ENCODE measurements at regions of chr1 and their contacts with region 1.

Region 1: DNA sequence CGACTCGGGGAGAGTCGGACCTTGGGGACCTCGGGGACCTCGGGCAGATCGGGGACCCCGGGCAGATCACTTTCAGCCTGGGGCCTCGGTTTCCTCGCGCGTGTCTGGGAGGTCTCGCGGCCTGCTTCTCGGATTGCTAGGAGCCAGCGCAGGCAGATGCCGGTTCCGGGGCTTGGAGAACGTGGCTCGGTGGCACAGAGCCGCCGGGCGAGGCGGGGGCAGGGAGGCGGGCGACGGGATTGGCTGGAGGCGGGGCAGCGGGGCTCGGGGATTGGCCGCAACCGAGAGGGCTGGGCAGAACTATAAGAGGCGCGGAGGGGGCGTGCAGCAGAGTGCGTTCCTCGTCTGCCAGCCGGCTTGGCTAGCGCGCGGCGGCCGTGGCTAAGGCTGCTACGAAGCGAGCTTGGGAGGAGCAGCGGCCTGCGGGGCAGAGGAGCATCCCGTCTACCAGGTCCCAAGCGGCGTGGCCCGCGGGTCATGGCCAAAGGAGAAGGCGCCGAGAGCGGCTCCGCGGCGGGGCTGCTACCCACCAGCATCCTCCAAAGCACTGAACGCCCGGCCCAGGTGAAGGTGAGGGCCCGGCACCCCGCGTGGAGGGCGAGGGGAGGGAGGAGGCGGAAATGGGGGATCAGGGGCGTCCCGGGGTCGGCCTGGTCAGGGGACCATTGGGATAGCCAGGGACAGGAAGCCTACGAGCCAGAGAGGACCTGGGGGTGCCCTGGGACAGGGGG is at the start of gene MFSD2A:
- DNase-seq: peak; percentile 69 to 95
- H3K4me3 ChIP-seq: peak within 1 kb of the TSS; percentile 50 to 78 (median 69)
- H3K27ac ChIP-seq: no peak within 1 kb of the TSS
- H3K4me1 ChIP-seq: peaks cover under 1 to 9% (median 7%) of the 10 kb centered on the region in 4 experiments
- H3K27me3 ChIP-seq: peaks cover 0 to 16% (median 12%) of the 10 kb centered on the region in 4 experiments; a peak in 5 of 7 replicates
- CTCF ChIP-seq: no peak
- EP300 ChIP-seq: no peak
- POLR2A ChIP-seq: peak; percentile 84 to 89
- RAD21 ChIP-seq: no peak
- total RNA-seq, gene MFSD2A: 25.9 and 26.6 TPM in 2 replicates

Region 2: GRCh38 chr1:39926343-39926793 is 28.6 kb before region 1 on chr1:
- CTCF ChIA-PET with region 1: interaction called, 77 read pairs
- POLR2A ChIA-PET with region 1: interaction called, 10 read pairs
- DNase-seq: no peak
- H3K4me3 ChIP-seq: no peak overlapping the region
- H3K27ac ChIP-seq: no peak overlapping the region
- H3K4me1 ChIP-seq: peaks cover 7 to 12% (median 9%) of the 10 kb centered on the region in 4 experiments
- H3K27me3 ChIP-seq: peaks cover 0 to 5% (median under 1%) of the 10 kb centered on the region in 4 experiments; a peak in 3 of 7 replicates
- CTCF ChIP-seq: no peak
- EP300 ChIP-seq: no peak
- POLR2A ChIP-seq: no peak
- RAD21 ChIP-seq: no peak

Region 3: DNA sequence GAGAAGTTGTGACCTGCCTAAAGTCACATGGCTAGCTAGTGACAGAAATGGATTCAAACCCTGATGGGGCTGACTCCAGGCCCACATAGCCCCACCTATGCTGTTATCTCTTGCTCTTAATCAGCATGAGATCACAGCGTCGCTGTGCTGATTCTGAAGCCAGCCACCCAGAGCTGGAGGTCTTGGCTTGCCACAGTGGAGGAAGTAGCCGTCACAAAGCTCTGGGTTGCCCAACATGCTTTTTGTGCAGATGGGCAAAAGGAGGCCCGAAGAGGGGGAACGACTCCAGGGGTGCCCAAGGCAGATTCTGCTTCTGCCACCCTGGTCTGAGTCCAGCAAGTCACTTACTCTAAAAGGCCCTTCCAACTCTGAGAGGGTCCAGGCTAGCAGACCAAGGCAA is 14.7 kb before region 1 on chr1:
- CTCF ChIA-PET with region 1: interaction called, 6 read pairs
- POLR2A ChIA-PET with region 1: interaction called, 29 read pairs
- DNase-seq: no peak
- H3K4me3 ChIP-seq: no peak overlapping the region
- H3K27ac ChIP-seq: no peak overlapping the region
- H3K4me1 ChIP-seq: peaks cover 0 to 3% (median 0%) of the 10 kb centered on the region in 4 experiments; a peak in 1 of 7 replicates
- H3K27me3 ChIP-seq: no peaks in the 10 kb centered on the region
- CTCF ChIP-seq: no peak
- EP300 ChIP-seq: no peak
- POLR2A ChIP-seq: no peak
- RAD21 ChIP-seq: no peak

Region 4: DNA sequence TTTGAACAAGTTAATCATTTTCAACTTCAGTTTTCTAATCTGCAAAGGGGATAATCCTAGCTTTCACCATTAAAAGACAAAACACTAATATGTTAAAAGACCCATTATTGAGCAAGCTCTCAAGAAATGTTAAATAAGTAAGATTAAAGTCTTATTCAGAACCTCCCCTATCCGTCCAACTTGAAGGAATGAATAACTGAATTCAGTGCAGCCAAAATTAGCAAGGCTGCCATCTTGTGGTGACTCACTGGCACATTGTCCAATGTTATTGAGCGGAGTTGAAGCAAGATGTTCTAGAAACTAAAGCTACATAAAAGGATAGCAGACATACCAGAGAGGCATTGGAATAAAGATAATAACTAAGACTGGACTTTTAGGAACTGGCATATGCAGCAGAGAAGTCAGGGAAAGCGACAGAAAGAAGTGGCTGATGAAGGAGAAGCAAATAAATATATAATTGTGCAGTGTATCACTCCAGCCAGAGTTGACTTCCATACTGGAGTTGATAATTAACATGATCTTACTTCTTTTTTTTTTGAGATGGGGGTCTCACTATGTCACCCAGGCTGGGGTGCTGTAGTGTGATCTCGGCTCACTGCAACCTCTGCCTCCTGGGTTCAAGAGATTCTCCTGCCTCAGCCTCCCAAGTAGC is 77.4 kb after region 1 on chr1:
- CTCF ChIA-PET with region 1: interaction called, 11 read pairs
- POLR2A ChIA-PET with region 1: interaction called, 3 read pairs
- DNase-seq: no peak
- H3K4me3 ChIP-seq: no peak overlapping the region
- H3K27ac ChIP-seq: no peak overlapping the region
- H3K4me1 ChIP-seq: no peaks in the 10 kb centered on the region
- H3K27me3 ChIP-seq: no peaks in the 10 kb centered on the region
- CTCF ChIP-seq: peak in 2 of 3 experiments; percentile 67 to 73; a peak in 3 of 4 replicates
- EP300 ChIP-seq: no peak
- POLR2A ChIP-seq: no peak
- RAD21 ChIP-seq: peak; percentile 71 to 76

Region 5: GRCh38 chr1:40040511-40041465 is 85.8 kb after region 1 on chr1 and contains the start of gene CAP1:
- CTCF ChIA-PET with region 1: no interaction called
- POLR2A ChIA-PET with region 1: interaction called, 10 read pairs
- DNase-seq: peak; percentile 97 to 99
- H3K4me3 ChIP-seq: peak within 1 kb of the TSS; percentile 79 to 99 (median 93)
- H3K27ac ChIP-seq: peak within 1 kb of the TSS; percentile 96
- H3K4me1 ChIP-seq: peaks cover 3 to 7% (median 3%) of the 10 kb centered on the region in 4 experiments; a peak in 4 of 7 replicates
- H3K27me3 ChIP-seq: no peaks in the 10 kb centered on the region
- CTCF ChIP-seq: no peak
- EP300 ChIP-seq: no peak
- POLR2A ChIP-seq: peak in 1 of 2 experiments; percentile 4; a peak in 1 of 3 replicates
- RAD21 ChIP-seq: no peak
- total RNA-seq, gene CAP1: 274 and 295 TPM in 2 replicates